ENCODE measurements at regions of chr17 and their contacts with region 1.

Region 1: GRCh38 chr17:30344283-30345088 is 10.6 kb upstream of the TMIGD1 start:
- DNase-seq: peak; percentile 96
- ATAC-seq: peak; percentile 83
- H3K4me3 ChIP-seq: peak overlapping the region; percentile 41 to 56 (median 47)
- H3K27ac ChIP-seq: peak overlapping the region; percentile 97
- H3K4me1 ChIP-seq: peaks cover 98% of the 10 kb centered on the region
- H3K27me3 ChIP-seq: no peaks in the 10 kb centered on the region
- CTCF ChIP-seq: 0 out of 2 replicates have a peak, but pooled peaks have one; percentile 10
- EP300 ChIP-seq: peak; percentile 44 to 88; a peak in 3 of 4 replicates
- POLR2A ChIP-seq: peak; percentile 51
- RAD21 ChIP-seq: no peak; the same call in 1 of the 2 replicates

Region 2: GRCh38 chr17:30378824-30379302 is 34.4 kb after region 1 on chr17 and contains the start of gene CPD:
- CTCF ChIA-PET with region 1: interaction called, 3 read pairs
- POLR2A ChIA-PET with region 1: interaction called, 114 read pairs
- in situ Hi-C with region 1: loop called (anchors 5 kb)
- intact Hi-C with region 1: loop called (anchors 2 kb)
- DNase-seq: peak; percentile 83
- ATAC-seq: peak; percentile 93
- H3K4me3 ChIP-seq: peak within 1 kb of the TSS; percentile 92 to 94 (median 92)
- H3K27ac ChIP-seq: peak within 1 kb of the TSS; percentile 68
- H3K4me1 ChIP-seq: peaks cover 65% of the 10 kb centered on the region
- H3K27me3 ChIP-seq: no peaks in the 10 kb centered on the region; a peak in 1 of 5 replicates
- CTCF ChIP-seq: no peak
- EP300 ChIP-seq: no peak
- POLR2A ChIP-seq: peak; percentile 81 to 84
- RAD21 ChIP-seq: peak; percentile 52
- total RNA-seq, gene CPD: 54.3 and 72.3 TPM in 2 replicates

Region 3: DNA sequence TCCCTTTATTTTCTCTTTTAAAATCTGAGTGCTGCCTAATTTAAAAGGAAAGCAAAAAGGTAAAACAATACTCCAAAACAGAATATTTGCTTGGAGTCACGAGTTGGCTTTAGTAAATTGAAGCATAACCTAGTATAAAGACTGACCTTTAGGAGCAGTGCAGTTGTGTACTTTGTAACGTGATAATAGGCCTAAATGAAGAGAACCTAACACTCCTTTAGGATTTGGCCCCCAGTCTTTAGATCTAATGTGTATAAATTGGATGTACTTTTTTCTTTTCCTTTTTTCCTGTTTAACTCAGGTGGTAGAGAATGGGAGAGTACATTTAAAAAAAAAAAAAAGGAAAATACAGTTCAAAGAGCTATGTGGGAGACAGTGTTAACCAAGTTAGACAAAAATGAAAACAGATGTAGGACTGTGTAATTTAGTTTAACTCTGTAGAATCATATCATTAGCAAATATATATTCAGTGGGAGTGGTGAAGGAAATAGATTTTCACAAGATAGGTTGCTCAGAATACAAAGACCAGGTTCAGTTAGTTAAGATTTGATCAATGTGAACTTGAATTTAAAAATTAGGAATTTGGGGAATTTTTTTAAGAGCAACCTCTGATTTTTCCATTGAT is 51.0 kb after region 1 on chr17:
- CTCF ChIA-PET with region 1: no interaction called
- POLR2A ChIA-PET with region 1: interaction called, 14 read pairs
- in situ Hi-C with region 1: no loop called
- intact Hi-C with region 1: no loop called
- DNase-seq: peak; percentile 62
- ATAC-seq: peak; percentile 69
- H3K4me3 ChIP-seq: peak overlapping the region in 2 of 3 experiments; percentile 9 to 19; a peak in 4 of 6 replicates
- H3K27ac ChIP-seq: peak overlapping the region; percentile 29
- H3K4me1 ChIP-seq: peaks cover 45% of the 10 kb centered on the region
- H3K27me3 ChIP-seq: no peaks in the 10 kb centered on the region
- CTCF ChIP-seq: no peak
- EP300 ChIP-seq: peak in 1 of 2 experiments; percentile 33; a peak in 1 of 4 replicates
- POLR2A ChIP-seq: no peak
- RAD21 ChIP-seq: no peak

Region 4: GRCh38 chr17:30405161-30405560 is 60.7 kb after region 1 on chr17:
- CTCF ChIA-PET with region 1: no interaction called
- POLR2A ChIA-PET with region 1: interaction called, 7 read pairs
- in situ Hi-C with region 1: no loop called
- intact Hi-C with region 1: loop called (anchors 2 kb)
- DNase-seq: peak; percentile 77
- ATAC-seq: no peak; the same call in 2 of the 3 replicates
- H3K4me3 ChIP-seq: no peak overlapping the region; a peak in 1 of 6 replicates
- H3K27ac ChIP-seq: peak overlapping the region; percentile 56
- H3K4me1 ChIP-seq: peaks cover 31% of the 10 kb centered on the region
- H3K27me3 ChIP-seq: no peaks in the 10 kb centered on the region
- CTCF ChIP-seq: no peak
- EP300 ChIP-seq: peak in 1 of 2 experiments; percentile 67; a peak in 1 of 4 replicates
- POLR2A ChIP-seq: no peak
- RAD21 ChIP-seq: no peak

Region 5: GRCh38 chr17:30477083-30477773 is 132.7 kb after region 1 on chr17 and contains the start of gene GOSR1:
- CTCF ChIA-PET with region 1: interaction called, 6 read pairs
- POLR2A ChIA-PET with region 1: interaction called, 11 read pairs
- in situ Hi-C with region 1: no loop called
- intact Hi-C with region 1: loop called (anchors 2 kb)
- DNase-seq: peak; percentile 90
- ATAC-seq: peak; percentile 98
- H3K4me3 ChIP-seq: peak within 1 kb of the TSS; percentile 82 to 95 (median 85)
- H3K27ac ChIP-seq: peak within 1 kb of the TSS; percentile 87
- H3K4me1 ChIP-seq: peaks cover 28% of the 10 kb centered on the region
- H3K27me3 ChIP-seq: no peaks in the 10 kb centered on the region; a peak in 1 of 5 replicates
- CTCF ChIP-seq: peak; percentile 97
- EP300 ChIP-seq: no peak
- POLR2A ChIP-seq: peak; percentile 94
- RAD21 ChIP-seq: 0 out of 2 replicates have a peak, but pooled peaks have one; percentile 52
- total RNA-seq, gene GOSR1: 37.0 and 44.6 TPM in 2 replicates